PC-9 (cell line): ENCODE measurements at regions of chr6 and their contacts with region 1.

Region 1: DNA sequence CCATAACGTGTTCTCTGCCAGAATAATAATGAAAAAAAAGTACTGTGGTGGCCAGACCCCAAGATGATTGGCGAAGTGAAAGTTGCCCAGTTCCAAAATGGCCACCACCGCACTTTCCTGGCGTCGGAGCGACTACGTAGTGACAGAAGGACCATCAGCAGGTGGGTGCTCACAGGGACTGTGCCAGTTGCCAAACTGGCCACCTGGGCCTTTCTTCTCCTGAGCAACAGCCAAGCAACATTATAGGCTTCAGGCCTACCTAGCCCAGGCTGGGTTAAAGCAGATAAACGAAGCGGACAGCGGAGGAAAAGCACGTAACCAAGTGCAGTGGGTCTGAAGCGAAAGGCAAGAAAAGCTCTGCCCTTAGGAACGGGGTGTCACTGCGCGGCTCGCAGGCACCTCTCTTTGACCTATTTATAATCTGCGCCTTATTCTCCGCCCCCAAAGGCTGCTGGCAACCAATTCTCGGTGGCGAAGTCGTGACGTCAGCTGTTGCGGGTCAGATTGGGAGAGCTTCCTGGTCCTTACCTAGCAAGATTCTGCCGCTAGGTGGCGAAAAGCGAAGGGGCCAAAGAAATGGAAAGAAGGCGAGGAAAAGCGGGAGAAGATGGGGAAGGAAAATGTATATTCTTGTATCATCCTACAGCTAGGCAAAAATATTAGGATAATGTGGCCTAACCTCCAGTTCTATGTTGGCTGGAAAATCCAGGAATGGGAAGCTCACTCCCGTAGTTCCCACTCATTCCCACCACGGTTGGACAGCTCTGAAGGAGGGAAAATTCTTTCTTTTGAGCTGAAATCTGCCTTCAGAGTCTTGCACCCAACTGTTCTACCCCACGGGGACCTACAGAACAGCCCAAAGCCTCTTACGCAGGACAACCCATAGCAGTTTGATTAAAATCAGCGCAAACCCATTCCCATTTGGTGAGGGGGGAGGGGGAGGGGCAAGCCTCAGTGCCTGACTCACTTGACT is 6.9 kb upstream of the MOG start:
- DNase-seq: peak; percentile 94 to 97
- H3K4me3 ChIP-seq: peak overlapping the region; percentile 81
- H3K27ac ChIP-seq: peak overlapping the region; percentile 66
- H3K4me1 ChIP-seq: peaks cover 3% of the 10 kb centered on the region; the same call in 1 of the 2 replicates
- H3K27me3 ChIP-seq: no peaks in the 10 kb centered on the region
- CTCF ChIP-seq: peak; percentile 89

Region 2: GRCh38 chr6:29589423-29590048 is 60.5 kb before region 1 on chr6:
- CTCF ChIA-PET with region 1: no interaction called
- POLR2A ChIA-PET with region 1: no interaction called
- intact Hi-C with region 1: no loop called
- DNase-seq: peak in 1 of 2 experiments; percentile 45
- H3K4me3 ChIP-seq: no peak overlapping the region
- H3K27ac ChIP-seq: no peak overlapping the region
- H3K4me1 ChIP-seq: no peaks in the 10 kb centered on the region
- H3K27me3 ChIP-seq: peaks cover 51% of the 10 kb centered on the region
- CTCF ChIP-seq: peak; percentile 97

Region 3: GRCh38 chr6:29661071-29661470 is 11.1 kb after region 1 on chr6:
- CTCF ChIA-PET with region 1: interaction called, 18 read pairs
- POLR2A ChIA-PET with region 1: no interaction called
- intact Hi-C with region 1: no loop called
- DNase-seq: no peak
- H3K4me3 ChIP-seq: no peak overlapping the region
- H3K27ac ChIP-seq: no peak overlapping the region
- H3K4me1 ChIP-seq: 0 out of 2 replicates have a peak, but pooled peaks cover 7% of the 10 kb centered on the region
- H3K27me3 ChIP-seq: no peaks in the 10 kb centered on the region
- CTCF ChIP-seq: no peak

Region 4: GRCh38 chr6:29676981-29677601 is 27.1 kb after region 1 on chr6:
- CTCF ChIA-PET with region 1: interaction called, 39 read pairs
- POLR2A ChIA-PET with region 1: no interaction called
- intact Hi-C with region 1: no loop called
- DNase-seq: peak; percentile 63 to 64
- H3K4me3 ChIP-seq: no peak overlapping the region
- H3K27ac ChIP-seq: peak overlapping the region; percentile 57
- H3K4me1 ChIP-seq: peaks cover 28% of the 10 kb centered on the region
- H3K27me3 ChIP-seq: no peaks in the 10 kb centered on the region
- CTCF ChIP-seq: no peak

Region 5: GRCh38 chr6:29696155-29697125 is 46.5 kb after region 1 on chr6:
- CTCF ChIA-PET with region 1: interaction called, 38 read pairs
- POLR2A ChIA-PET with region 1: no interaction called
- intact Hi-C with region 1: loop called (anchors 1 kb)
- DNase-seq: peak in 1 of 2 experiments; percentile 33
- H3K4me3 ChIP-seq: no peak overlapping the region
- H3K27ac ChIP-seq: no peak overlapping the region
- H3K4me1 ChIP-seq: no peaks in the 10 kb centered on the region
- H3K27me3 ChIP-seq: no peaks in the 10 kb centered on the region
- CTCF ChIP-seq: peak; percentile 63

Region 6: GRCh38 chr6:29792123-29793035 is 142.4 kb after region 1 on chr6:
- CTCF ChIA-PET with region 1: interaction called, 3 read pairs
- POLR2A ChIA-PET with region 1: no interaction called
- intact Hi-C with region 1: loop called (anchors 1 kb)
- DNase-seq: peak in 1 of 2 experiments; percentile 69
- H3K4me3 ChIP-seq: peak overlapping the region; percentile 75
- H3K27ac ChIP-seq: peak overlapping the region; percentile 89
- H3K4me1 ChIP-seq: peaks cover 30% of the 10 kb centered on the region
- H3K27me3 ChIP-seq: no peaks in the 10 kb centered on the region
- CTCF ChIP-seq: peak; percentile 67

Region 7: GRCh38 chr6:30169658-30170614 is 519.9 kb after region 1 on chr6:
- CTCF ChIA-PET with region 1: no interaction called
- POLR2A ChIA-PET with region 1: no interaction called
- intact Hi-C with region 1: loop called (anchors 1 kb)
- DNase-seq: peak; percentile 11 to 51
- H3K4me3 ChIP-seq: no peak overlapping the region
- H3K27ac ChIP-seq: no peak overlapping the region
- H3K4me1 ChIP-seq: no peaks in the 10 kb centered on the region
- H3K27me3 ChIP-seq: peaks cover 28% of the 10 kb centered on the region
- CTCF ChIP-seq: peak; percentile 87